ENCODE measurements at regions of chr11 and their contacts with region 1.

Region 1: GRCh38 chr11:73177778-73178577 is 35.9 kb upstream of the FCHSD2 start:
- DNase-seq: peak; percentile 92
- H3K27ac ChIP-seq: peak overlapping the region; percentile 49
- CTCF ChIP-seq: peak; percentile 73

Region 2: GRCh38 chr11:72724851-72725730 is 452.9 kb before region 1 on chr11:
- CTCF ChIA-PET with region 1: interaction called, 15 read pairs
- POLR2A ChIA-PET with region 1: no interaction called
- DNase-seq: peak; percentile 78
- H3K27ac ChIP-seq: peak overlapping the region; percentile 97
- CTCF ChIP-seq: peak; percentile 90

Region 3: GRCh38 chr11:72831513-72832300 is 346.3 kb before region 1 on chr11:
- CTCF ChIA-PET with region 1: interaction called, 41 read pairs
- POLR2A ChIA-PET with region 1: no interaction called
- DNase-seq: peak; percentile 68
- H3K27ac ChIP-seq: peak overlapping the region; percentile 59
- CTCF ChIP-seq: peak; percentile 90

Region 4: DNA sequence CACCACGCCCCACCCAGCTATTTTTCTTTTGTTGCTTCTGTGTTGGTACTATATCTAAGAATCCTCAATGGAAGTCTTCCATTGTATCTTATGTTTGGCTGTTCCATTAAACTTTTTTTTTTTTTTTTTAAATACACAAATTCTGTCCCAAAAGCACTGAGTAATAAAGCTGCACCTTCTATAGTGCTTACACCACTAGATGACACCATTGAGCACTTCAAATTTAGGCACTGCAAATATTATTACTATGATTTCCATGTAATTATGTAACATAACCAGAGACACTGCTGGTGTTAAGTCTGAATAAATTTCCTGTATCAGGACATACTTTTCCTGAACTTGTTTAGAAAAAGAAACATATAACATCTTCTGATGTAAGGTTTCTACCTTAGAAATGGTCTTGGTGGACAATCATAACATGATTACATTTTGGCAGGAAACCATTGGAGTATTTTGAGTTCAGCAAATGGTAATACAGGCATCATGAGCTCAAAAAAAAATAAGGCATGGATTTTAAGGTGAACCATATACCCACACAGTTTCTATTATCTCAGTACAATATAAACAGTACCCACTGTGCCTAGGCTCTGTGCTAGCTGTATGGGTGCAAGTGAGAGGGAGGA is 253.3 kb before region 1 on chr11:
- CTCF ChIA-PET with region 1: interaction called, 14 read pairs
- POLR2A ChIA-PET with region 1: no interaction called
- DNase-seq: peak; percentile 28
- H3K27ac ChIP-seq: no peak overlapping the region
- CTCF ChIP-seq: peak; percentile 52

Measured in RWPE1 (cell line).